ENCODE measurements at regions of chr11 and their contacts with region 1.

Region 1: GRCh38 chr11:125903711-125904659 is at the start of gene DDX25:
- DNase-seq: peak in 41 of 42 donors; percentile 60 to 90 (median 79)

Region 2: GRCh38 chr11:125887373-125888324 is 16.3 kb before region 1 on chr11 and contains the start of gene HYLS1:
- intact Hi-C with region 1: loop called (anchors 2 kb)
- DNase-seq: peak; percentile 88 to 98 (median 95)

Region 3: GRCh38 chr11:125950696-125951651 is 47.0 kb after region 1 on chr11:
- intact Hi-C with region 1: no loop called
- DNase-seq: peak in 3 of 42 donors; percentile 13 to 28 (median 27)

Region 4: GRCh38 chr11:126163074-126163700 is 259.2 kb after region 1 on chr11:
- intact Hi-C with region 1: no loop called
- DNase-seq: peak in 26 of 42 donors; percentile 5 to 68 (median 29)

Measured in head of caudate nucleus (tissue), 42 donors.